ENCODE measurements at regions of chr18 and their contacts with region 1.

Region 1: DNA sequence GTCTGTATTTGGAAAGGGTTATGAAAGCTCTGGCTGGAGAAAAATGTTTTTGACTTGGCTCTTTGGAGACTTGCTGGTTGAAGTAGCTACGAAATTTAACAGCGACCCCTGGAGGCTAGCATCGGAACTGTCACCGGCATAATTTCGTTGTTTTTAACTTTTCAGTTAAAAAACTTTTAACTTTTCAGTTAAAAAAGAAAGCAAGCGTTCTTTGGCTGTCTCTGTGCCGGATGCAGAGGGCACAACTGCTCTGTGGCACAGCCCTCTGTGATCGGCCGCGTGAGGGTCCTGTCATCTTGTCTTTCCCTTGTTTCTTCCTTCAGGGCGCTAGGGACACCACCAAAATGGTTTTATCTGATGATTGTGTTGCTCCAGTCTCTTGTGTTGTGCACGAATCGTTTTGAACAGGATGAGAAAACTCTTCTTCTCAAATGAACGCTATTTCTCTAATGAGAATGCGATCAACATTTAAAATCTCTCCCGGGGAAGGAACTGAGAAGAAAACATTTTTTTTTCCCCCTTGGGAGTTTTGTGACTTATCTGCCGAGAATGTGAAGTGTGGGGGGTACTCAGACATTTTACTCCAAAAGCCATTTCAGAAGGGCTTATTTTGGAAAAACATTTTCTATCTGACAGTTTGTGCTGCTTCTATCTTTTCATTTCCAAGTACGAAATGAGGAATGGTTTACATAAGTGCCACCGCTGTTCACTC is 57.1 kb downstream of the ADCYAP1 start:
- DNase-seq: no peak
- ATAC-seq: no peak

Region 2: GRCh38 chr18:864872-865273 is 96.9 kb before region 1 on chr18:
- intact Hi-C with region 1: loop called (anchors 5 kb)
- DNase-seq: peak; percentile 76
- ATAC-seq: peak; percentile 79

Region 3: DNA sequence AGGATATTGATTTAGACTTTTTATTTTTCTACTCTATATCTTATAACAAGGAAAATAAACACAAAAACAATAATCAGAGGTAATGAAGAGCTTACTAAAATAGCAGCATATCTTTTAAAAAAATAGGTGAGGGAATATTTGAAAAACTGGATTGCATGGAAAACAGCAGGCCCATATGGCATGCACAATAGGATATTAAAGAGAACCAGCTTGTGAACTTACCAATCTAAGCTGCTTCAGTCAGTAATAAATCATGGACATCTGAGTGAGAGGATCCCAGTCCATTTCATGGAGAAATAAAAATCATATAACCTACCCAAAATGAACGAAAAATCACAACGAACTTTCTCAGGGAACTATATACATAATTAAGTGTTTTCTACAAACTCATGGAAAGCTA is 577.5 kb after region 1 on chr18:
- intact Hi-C with region 1: no loop called
- DNase-seq: no peak
- ATAC-seq: no peak